OCI-LY7 (cell line): ENCODE measurements at regions of chr11 and their contacts with region 1.

Region 1: GRCh38 chr11:117232092-117232878 is at the start of gene RNF214:
- DNase-seq: peak; percentile 88
- H3K4me3 ChIP-seq: peak within 1 kb of the TSS; percentile 99
- H3K27ac ChIP-seq: peak within 1 kb of the TSS; percentile 84
- H3K4me1 ChIP-seq: peaks cover 35% of the 10 kb centered on the region
- CTCF ChIP-seq: peak; percentile 83
- total RNA-seq, gene RNF214: 10.9 and 11.2 TPM in 2 replicates

Region 2: DNA sequence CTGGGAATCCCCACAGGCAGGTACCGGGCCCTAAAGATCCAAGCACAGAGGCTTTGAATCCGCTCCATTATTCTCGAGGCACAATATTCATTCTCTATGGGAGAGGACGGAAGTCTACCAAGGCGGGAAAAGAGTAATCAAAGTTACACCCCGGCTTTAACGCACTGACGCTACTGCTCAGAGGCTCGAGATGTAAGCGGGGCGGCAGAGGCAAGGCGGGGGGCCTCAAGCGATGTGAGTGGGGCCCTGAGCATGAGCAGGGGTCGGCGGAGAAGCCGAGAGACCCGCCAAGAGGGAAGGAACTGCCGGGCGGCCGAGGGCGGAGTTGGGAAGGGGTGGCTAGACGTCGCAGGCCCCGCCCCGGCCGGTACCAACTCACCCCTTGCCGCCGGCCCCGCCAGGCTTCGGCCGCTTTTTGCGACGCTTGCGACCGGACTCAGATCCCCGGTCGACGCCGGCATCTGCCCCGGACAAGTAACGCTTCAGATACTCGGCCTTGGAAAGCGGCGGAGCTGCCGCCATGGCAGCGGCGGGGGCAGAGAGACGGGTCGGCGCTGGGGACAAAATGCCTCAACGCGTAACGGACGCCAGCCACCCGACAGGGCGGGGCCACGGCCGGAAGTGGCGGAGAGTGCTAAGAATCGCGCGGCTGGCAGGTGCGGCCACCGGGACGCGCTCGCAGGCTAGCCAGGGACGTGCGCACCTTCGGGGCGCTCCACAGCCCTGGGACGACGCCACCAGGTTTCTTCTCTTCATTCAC is 459.7 kb before region 1 on chr11 and contains the start of gene BUD13:
- CTCF ChIA-PET with region 1: no interaction called
- POLR2A ChIA-PET with region 1: interaction called, 3 read pairs
- intact Hi-C with region 1: loop called (anchors 5 kb)
- DNase-seq: peak; percentile 94
- H3K4me3 ChIP-seq: peak within 1 kb of the TSS; percentile 81
- H3K27ac ChIP-seq: peak within 1 kb of the TSS; percentile 81
- H3K4me1 ChIP-seq: peaks cover 43% of the 10 kb centered on the region
- CTCF ChIP-seq: no peak
- total RNA-seq, gene BUD13: 28.6 and 34.1 TPM in 2 replicates

Region 3: GRCh38 chr11:117143871-117144476 is 88.3 kb before region 1 on chr11 and contains the start of gene PAFAH1B2:
- CTCF ChIA-PET with region 1: no interaction called
- POLR2A ChIA-PET with region 1: interaction called, 8 read pairs
- intact Hi-C with region 1: loop called (anchors 5 kb)
- DNase-seq: peak; percentile 98
- H3K4me3 ChIP-seq: peak within 1 kb of the TSS; percentile 94
- H3K27ac ChIP-seq: peak within 1 kb of the TSS; percentile 64
- H3K4me1 ChIP-seq: peaks cover 30% of the 10 kb centered on the region
- CTCF ChIP-seq: no peak
- total RNA-seq, gene PAFAH1B2: 62.8 and 65.3 TPM in 2 replicates

Region 4: DNA sequence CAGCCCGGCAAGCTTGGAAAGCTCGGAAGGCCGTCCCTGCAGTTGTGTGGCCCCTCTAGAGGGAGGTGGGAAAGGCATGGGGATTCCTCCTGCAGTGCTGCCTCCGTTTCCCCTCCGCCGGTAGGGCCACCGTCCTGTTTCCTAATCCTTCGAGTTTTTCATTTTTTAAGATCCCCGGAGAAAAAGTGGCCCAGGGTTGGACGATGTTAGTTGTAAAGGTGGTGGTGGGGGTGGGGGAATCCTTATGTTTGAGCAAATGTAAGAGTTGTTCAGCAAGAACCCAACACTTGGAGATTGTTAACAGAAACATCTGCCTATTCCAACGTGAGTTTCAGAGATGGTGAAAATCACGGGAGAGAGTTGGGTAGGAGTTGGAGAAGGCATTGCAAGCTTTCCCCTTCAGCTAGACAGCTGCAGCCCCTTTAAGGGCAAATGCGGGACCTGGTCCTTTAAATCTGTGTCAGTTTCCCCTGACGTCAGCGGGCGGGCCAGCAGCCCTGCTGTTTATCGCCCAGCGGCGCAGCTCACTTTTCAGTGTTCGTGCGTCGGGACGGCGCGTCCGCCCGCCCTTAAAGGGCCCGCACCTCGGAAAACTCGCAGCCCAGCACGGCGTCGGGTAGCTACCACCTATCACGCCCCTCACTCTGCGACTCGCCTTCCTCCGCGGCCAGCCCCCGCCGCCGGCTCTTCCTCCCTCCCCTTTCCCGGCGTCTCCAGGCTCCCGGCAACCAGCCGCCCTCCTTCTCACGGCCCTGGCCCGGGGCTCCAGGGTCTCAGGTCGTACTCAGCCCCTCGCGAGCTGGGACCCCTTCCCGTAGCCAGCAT is 53.9 kb before region 1 on chr11 and contains the start of gene SIDT2:
- CTCF ChIA-PET with region 1: interaction called, 7 read pairs
- POLR2A ChIA-PET with region 1: interaction called, 30 read pairs
- intact Hi-C with region 1: loop called (anchors 1 kb)
- DNase-seq: peak; percentile 96
- H3K4me3 ChIP-seq: peak within 1 kb of the TSS; percentile 88
- H3K27ac ChIP-seq: peak within 1 kb of the TSS; percentile 52
- H3K4me1 ChIP-seq: peaks cover 30% of the 10 kb centered on the region
- CTCF ChIP-seq: no peak
- total RNA-seq, gene SIDT2: 18.3 and 18.6 TPM in 2 replicates

Region 5: GRCh38 chr11:117189191-117189930 is 42.9 kb before region 1 on chr11:
- CTCF ChIA-PET with region 1: no interaction called
- POLR2A ChIA-PET with region 1: no interaction called
- intact Hi-C with region 1: no loop called
- DNase-seq: peak; percentile 76
- H3K4me3 ChIP-seq: peak overlapping the region; percentile 7
- H3K27ac ChIP-seq: peak overlapping the region; percentile 44
- H3K4me1 ChIP-seq: peaks cover 37% of the 10 kb centered on the region
- CTCF ChIP-seq: no peak

Region 6: GRCh38 chr11:117327567-117328374 is 95.5 kb after region 1 on chr11 and contains the start of gene CEP164:
- CTCF ChIA-PET with region 1: no interaction called
- POLR2A ChIA-PET with region 1: no interaction called
- intact Hi-C with region 1: loop called (anchors 2 kb)
- DNase-seq: peak; percentile 98
- H3K4me3 ChIP-seq: peak within 1 kb of the TSS; percentile 92
- H3K27ac ChIP-seq: peak within 1 kb of the TSS; percentile 60
- H3K4me1 ChIP-seq: peaks cover 10% of the 10 kb centered on the region
- CTCF ChIP-seq: no peak
- total RNA-seq, gene CEP164: 25.3 and 34.6 TPM in 2 replicates

Region 7: GRCh38 chr11:117497206-117497951 is 265.1 kb after region 1 on chr11:
- CTCF ChIA-PET with region 1: no interaction called
- POLR2A ChIA-PET with region 1: no interaction called
- intact Hi-C with region 1: no loop called
- DNase-seq: no peak
- H3K4me3 ChIP-seq: no peak overlapping the region
- H3K27ac ChIP-seq: no peak overlapping the region
- H3K4me1 ChIP-seq: no peaks in the 10 kb centered on the region
- CTCF ChIP-seq: no peak